Mammary epithelial cell (primary cell): ENCODE measurements at regions of chr9 and their contacts with region 1.

Region 1: DNA sequence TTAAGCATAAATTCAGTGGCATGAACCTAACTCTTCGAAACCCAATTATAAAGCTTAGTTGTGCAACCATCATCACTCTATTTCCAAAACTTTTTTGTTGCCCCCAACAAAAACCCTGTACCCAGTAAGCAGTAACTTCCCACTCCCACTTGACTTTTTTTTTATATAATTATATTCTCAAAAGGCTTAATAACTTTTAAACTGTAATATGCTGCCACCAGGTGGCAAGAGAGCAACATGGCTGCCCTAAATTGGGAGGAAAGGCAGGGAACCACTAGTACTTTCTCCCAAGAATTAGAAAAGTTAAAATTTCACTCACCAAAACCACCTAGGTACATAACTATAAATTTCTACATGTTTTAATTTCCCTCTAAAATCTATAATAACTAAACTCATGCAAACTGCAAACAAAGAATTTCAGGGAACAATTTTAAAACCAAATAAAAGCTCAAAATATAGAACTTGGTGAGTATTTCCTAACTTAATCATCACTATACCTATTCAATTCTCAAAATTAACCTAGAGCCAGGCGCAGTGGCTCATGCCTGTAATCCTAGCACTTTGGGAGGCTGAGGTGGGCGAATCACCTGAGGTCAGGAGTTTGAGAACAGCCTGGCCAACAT is 50.2 kb upstream of the RNF38 start:
- DNase-seq: peak; percentile 26
- H3K4me3 ChIP-seq: no peak overlapping the region
- H3K27ac ChIP-seq: no peak overlapping the region
- H3K4me1 ChIP-seq: no peaks in the 10 kb centered on the region
- H3K27me3 ChIP-seq: no peaks in the 10 kb centered on the region
- CTCF ChIP-seq: peak; percentile 65 to 74

Region 2: GRCh38 chr9:36337865-36338264 is 112.4 kb before region 1 on chr9:
- CTCF ChIA-PET with region 1: no interaction called
- dilution Hi-C with region 1: no loop called
- in situ Hi-C with region 1: no loop called
- intact Hi-C with region 1: loop called (anchors 5 kb)
- DNase-seq: peak; percentile 40
- H3K4me3 ChIP-seq: no peak overlapping the region
- H3K27ac ChIP-seq: peak overlapping the region; percentile 2
- H3K4me1 ChIP-seq: peaks cover 22% of the 10 kb centered on the region
- H3K27me3 ChIP-seq: no peaks in the 10 kb centered on the region
- CTCF ChIP-seq: no peak

Region 3: DNA sequence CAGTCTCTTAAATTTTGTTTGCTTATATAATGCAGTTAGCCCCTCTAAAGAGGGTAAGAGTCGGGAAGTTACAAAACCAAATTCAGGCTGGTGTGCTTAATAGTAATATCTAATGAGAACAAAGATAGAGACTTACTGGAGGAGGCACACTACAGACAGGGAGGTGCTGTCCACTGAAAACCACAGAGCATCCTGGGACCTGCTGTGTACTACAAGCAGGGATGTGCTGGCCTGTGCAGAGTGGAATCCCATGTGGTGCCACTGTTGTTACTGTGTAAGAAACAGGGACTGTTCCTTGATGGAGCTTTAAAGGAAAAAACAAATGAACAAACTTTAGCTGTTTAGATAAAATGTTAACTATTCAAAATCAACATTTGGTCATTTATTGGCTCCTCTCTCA is 92.6 kb before region 1 on chr9:
- CTCF ChIA-PET with region 1: no interaction called
- dilution Hi-C with region 1: loop called (anchors 5 kb)
- in situ Hi-C with region 1: no loop called
- intact Hi-C with region 1: no loop called
- DNase-seq: no peak
- H3K4me3 ChIP-seq: no peak overlapping the region
- H3K27ac ChIP-seq: no peak overlapping the region
- H3K4me1 ChIP-seq: no peaks in the 10 kb centered on the region
- H3K27me3 ChIP-seq: no peaks in the 10 kb centered on the region
- CTCF ChIP-seq: no peak

Region 4: DNA sequence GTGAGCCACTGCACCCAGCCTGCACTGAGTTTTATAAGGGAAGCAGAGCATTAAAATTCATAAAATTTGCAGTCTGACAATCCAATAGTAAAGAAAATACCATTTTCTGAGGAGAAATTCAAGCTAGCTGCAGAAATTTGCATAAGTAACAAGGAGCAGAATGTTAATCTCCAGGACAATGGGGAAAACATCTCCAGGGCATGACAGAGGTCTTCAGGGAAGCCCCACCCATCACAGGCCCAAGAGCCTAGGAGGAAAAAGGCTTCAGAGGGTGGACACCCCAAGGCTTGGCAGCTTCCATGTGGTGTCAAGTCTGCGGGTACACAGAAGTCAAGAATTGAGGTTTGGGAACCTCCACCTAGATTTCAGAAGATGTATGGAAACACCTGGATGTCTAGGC is 84.9 kb after region 1 on chr9:
- CTCF ChIA-PET with region 1: no interaction called
- dilution Hi-C with region 1: loop called (anchors 5 kb)
- in situ Hi-C with region 1: no loop called
- intact Hi-C with region 1: no loop called
- DNase-seq: no peak
- H3K4me3 ChIP-seq: no peak overlapping the region
- H3K27ac ChIP-seq: no peak overlapping the region
- H3K4me1 ChIP-seq: no peaks in the 10 kb centered on the region
- H3K27me3 ChIP-seq: no peaks in the 10 kb centered on the region
- CTCF ChIP-seq: no peak

Region 5: GRCh38 chr9:36551129-36551528 is 100.9 kb after region 1 on chr9:
- CTCF ChIA-PET with region 1: no interaction called
- dilution Hi-C with region 1: no loop called
- in situ Hi-C with region 1: no loop called
- intact Hi-C with region 1: loop called (anchors 1 kb)
- DNase-seq: no peak
- H3K4me3 ChIP-seq: no peak overlapping the region
- H3K27ac ChIP-seq: no peak overlapping the region
- H3K4me1 ChIP-seq: no peaks in the 10 kb centered on the region
- H3K27me3 ChIP-seq: no peaks in the 10 kb centered on the region
- CTCF ChIP-seq: no peak

Region 6: GRCh38 chr9:36946653-36947052 is 496.4 kb after region 1 on chr9:
- CTCF ChIA-PET with region 1: no interaction called
- dilution Hi-C with region 1: no loop called
- in situ Hi-C with region 1: no loop called
- intact Hi-C with region 1: no loop called
- DNase-seq: peak; percentile 35
- H3K4me3 ChIP-seq: no peak overlapping the region
- H3K27ac ChIP-seq: no peak overlapping the region
- H3K4me1 ChIP-seq: no peaks in the 10 kb centered on the region
- H3K27me3 ChIP-seq: no peaks in the 10 kb centered on the region
- CTCF ChIP-seq: no peak